ENCODE measurements at regions of chr12 and their contacts with region 1.

Region 1: GRCh38 chr12:92396647-92397252 is 251.1 kb upstream of the BTG1 start:
- DNase-seq: peak; percentile 93
- H3K4me3 ChIP-seq: no peak overlapping the region
- H3K27ac ChIP-seq: peak overlapping the region; percentile 49
- H3K4me1 ChIP-seq: peaks cover 19% of the 10 kb centered on the region
- H3K27me3 ChIP-seq: no peaks in the 10 kb centered on the region
- CTCF ChIP-seq: no peak

Region 2: GRCh38 chr12:92289629-92290349 is 107.0 kb before region 1 on chr12:
- CTCF ChIA-PET with region 1: interaction called, 5 read pairs
- dilution Hi-C with region 1: no loop called
- in situ Hi-C with region 1: no loop called
- intact Hi-C with region 1: loop called (anchors 5 kb)
- DNase-seq: peak; percentile 51
- H3K4me3 ChIP-seq: no peak overlapping the region
- H3K27ac ChIP-seq: no peak overlapping the region
- H3K4me1 ChIP-seq: peaks cover 19% of the 10 kb centered on the region
- H3K27me3 ChIP-seq: no peaks in the 10 kb centered on the region
- CTCF ChIP-seq: no peak

Region 3: DNA sequence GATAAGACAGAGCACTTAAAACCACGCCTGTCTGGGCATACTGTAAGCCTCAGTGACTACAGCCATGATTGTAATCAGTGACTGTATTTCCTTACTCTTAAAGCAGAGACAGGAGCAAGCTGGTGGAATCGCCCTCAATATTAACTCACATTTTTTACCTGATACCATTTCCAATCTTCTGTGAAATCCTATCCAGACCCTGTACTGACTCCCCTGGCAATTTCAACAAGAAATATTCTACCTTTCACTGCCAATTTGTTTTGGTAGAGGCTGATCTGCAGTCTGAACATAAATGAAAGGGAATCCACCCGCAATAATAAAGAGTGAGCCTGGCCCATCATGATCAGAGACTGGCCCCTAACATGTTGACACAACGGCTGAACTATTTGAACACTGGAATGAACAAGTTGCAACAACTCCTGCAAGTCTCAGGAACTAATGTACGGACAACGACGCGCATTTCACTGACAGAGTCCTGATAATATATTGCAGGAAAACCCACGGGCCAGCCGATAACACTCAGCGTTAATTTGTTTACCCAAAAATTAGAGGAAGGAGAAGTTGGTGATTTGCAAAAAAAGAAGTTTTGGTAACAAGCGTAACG is 55.6 kb before region 1 on chr12:
- CTCF ChIA-PET with region 1: no interaction called
- dilution Hi-C with region 1: no loop called
- in situ Hi-C with region 1: no loop called
- intact Hi-C with region 1: loop called (anchors 5 kb)
- DNase-seq: peak; percentile 84
- H3K4me3 ChIP-seq: peak overlapping the region in 2 of 3 experiments; percentile 36 to 46
- H3K27ac ChIP-seq: peak overlapping the region; percentile 69
- H3K4me1 ChIP-seq: peaks cover 14% of the 10 kb centered on the region
- H3K27me3 ChIP-seq: no peaks in the 10 kb centered on the region
- CTCF ChIP-seq: no peak

Region 4: DNA sequence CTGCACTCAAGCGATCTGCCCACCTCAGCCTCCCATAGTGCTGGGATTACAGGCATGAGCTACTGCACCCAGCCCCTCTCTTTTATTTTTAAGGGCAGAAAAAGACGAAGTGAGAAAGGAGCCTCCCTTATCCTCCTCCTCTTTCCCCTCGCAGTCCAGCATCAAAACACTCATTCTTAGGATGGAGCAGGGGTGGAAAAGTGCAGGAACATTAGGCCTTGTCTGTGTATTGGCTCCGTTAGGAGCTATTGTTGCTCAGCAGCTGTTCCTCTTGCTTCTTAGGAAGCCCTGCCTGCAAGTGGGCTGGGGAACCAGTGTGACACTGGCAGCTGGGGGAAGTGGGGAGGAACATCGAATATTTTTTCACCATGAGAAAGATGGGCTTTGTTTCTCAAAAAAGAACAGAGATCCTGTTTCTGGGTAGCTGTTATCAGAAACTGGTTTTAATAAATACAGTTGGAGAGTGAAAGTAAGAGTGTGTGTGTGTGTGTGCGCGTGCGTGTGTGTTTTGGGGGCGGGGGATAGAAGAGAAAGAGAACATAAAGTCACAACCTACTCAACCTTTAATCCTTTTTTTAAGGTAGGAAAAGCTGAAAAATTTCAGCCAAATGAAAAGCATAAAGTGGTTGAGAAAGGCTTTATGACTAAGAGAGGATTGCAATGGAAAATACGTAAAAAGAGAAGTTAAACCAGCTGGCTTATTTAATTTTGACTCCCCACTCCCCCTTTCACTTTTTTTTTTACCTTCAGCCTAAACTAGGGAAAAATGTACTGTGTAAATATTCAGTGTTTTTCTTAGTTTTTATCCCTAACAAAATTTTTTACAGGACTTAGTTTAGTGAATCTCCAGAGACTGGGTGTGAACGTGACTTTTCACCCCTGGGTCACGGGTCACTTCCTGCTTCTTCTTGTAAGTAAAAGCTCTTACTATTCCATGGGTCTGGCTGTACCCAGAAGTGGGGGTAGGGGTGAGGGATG is 108.8 kb after region 1 on chr12:
- CTCF ChIA-PET with region 1: no interaction called
- dilution Hi-C with region 1: no loop called
- in situ Hi-C with region 1: no loop called
- intact Hi-C with region 1: no loop called
- DNase-seq: no peak
- H3K4me3 ChIP-seq: no peak overlapping the region
- H3K27ac ChIP-seq: no peak overlapping the region
- H3K4me1 ChIP-seq: peaks cover 3% of the 10 kb centered on the region
- H3K27me3 ChIP-seq: no peaks in the 10 kb centered on the region
- CTCF ChIP-seq: no peak